ENCODE measurements at regions of chr16 and their contacts with region 1.

Region 1: DNA sequence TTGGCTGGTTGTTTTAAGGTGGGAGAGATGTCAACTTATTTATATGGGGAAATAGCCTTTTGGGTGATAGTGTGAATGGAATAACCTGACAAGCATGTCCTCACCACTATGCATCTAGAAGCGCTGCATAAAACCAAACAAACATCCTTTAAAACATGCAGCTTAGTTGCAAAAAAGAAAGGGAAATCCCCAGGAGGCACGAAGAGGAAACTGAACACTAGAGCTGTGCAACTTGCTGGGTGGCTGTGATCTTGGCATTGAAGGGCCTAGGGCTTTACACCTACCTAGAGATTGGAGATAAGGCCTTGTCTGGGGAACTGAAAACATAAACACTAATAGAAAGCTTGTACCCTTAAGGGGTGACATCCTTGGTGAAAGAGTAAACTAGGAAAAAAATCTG is 7.3 kb downstream of the C16orf54 start:
- DNase-seq: peak; percentile 74
- ATAC-seq: peak; percentile 91
- H3K4me3 ChIP-seq: peak overlapping the region in 1 of 5 experiments; percentile 9
- H3K4me3 Mint-ChIP-seq: peak overlapping the region; percentile 66
- H3K27ac ChIP-seq: peak overlapping the region in 1 of 2 donors; percentile 47
- H3K27ac Mint-ChIP-seq: peak overlapping the region; percentile 90
- H3K4me1 ChIP-seq: peaks cover 47 to 62% of the 10 kb centered on the region in 2 donors
- H3K4me1 Mint-ChIP-seq: peaks cover 73% of the 10 kb centered on the region
- H3K27me3 ChIP-seq: no peaks in the 10 kb centered on the region
- H3K27me3 Mint-ChIP-seq: no peaks in the 10 kb centered on the region
- CTCF ChIP-seq: no peak

Region 2: GRCh38 chr16:29678691-29679267 is 59.7 kb before region 1 on chr16 and contains the start of gene QPRT:
- CTCF ChIA-PET with region 1: no interaction called
- POLR2A ChIA-PET with region 1: interaction called, 15 read pairs
- intact Hi-C with region 1: loop called (anchors 10 kb)
- DNase-seq: peak; percentile 10
- ATAC-seq: no peak
- H3K4me3 ChIP-seq: peak within 1 kb of the TSS in 2 of 5 experiments; percentile 8 to 19
- H3K4me3 Mint-ChIP-seq: peak within 1 kb of the TSS; percentile 79
- H3K27ac ChIP-seq: no peak within 1 kb of the TSS
- H3K27ac Mint-ChIP-seq: peak within 1 kb of the TSS; percentile 21
- H3K4me1 ChIP-seq: peaks cover 14 to 25% of the 10 kb centered on the region in 2 donors
- H3K4me1 Mint-ChIP-seq: peaks cover 19% of the 10 kb centered on the region
- H3K27me3 ChIP-seq: no peaks in the 10 kb centered on the region
- H3K27me3 Mint-ChIP-seq: no peaks in the 10 kb centered on the region
- CTCF ChIP-seq: no peak
- total RNA-seq, gene QPRT: 0.22 and 0.24 TPM in 2 replicates

Region 3: GRCh38 chr16:29765167-29766032 is 26.9 kb after region 1 on chr16:
- CTCF ChIA-PET with region 1: no interaction called
- POLR2A ChIA-PET with region 1: no interaction called
- intact Hi-C with region 1: no loop called
- DNase-seq: no peak
- ATAC-seq: no peak
- H3K4me3 ChIP-seq: no peak overlapping the region
- H3K4me3 Mint-ChIP-seq: no peak overlapping the region
- H3K27ac ChIP-seq: no peak overlapping the region
- H3K27ac Mint-ChIP-seq: no peak overlapping the region
- H3K4me1 ChIP-seq: peaks cover 0 to 3% of the 10 kb centered on the region in 2 donors
- H3K4me1 Mint-ChIP-seq: no peaks in the 10 kb centered on the region
- H3K27me3 ChIP-seq: no peaks in the 10 kb centered on the region
- H3K27me3 Mint-ChIP-seq: no peaks in the 10 kb centered on the region
- CTCF ChIP-seq: no peak

Region 4: DNA sequence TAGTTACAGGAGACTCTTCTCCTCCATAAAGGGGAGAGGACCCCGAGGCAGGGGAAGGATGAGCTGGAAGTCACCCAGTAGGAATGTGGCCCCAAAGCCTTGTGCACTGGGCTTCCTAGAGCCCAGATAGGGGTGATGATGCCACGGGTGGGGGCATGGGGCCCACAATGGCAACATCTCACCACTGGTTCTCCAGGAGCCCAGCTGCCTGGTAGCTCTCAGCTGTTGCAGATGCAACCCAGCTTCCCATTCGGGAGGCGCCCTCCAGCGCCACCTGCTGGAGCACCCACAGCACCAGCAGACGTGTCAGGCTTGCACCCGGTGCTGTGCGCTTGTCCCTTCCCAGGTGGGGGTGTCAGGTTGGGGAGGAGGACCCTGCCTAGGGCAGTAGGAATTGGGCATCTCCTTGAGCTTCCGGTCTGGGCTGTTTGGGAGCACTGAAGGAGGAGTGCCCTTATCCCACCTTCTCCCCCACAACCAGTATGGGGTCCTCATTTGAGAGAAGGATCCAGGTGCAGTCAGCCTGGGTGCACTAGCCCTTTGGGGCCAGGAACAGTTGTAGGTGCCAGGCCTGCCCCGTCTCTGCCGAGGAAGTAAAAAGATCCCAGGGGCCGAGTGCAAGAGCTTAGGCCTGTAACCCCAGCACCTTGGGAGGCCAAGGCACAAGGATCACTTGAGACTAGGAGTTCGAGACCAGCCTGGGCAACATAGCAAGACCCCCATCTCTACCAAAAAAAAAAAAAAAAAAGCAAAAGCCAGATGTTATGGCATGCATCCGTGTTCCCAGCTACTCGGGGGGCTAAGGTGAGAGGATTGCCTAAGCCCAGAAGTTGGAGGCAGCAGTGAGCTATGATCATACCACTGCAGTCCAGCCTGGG is 110.1 kb after region 1 on chr16:
- CTCF ChIA-PET with region 1: interaction called, 10 read pairs
- POLR2A ChIA-PET with region 1: no interaction called
- intact Hi-C with region 1: no loop called
- DNase-seq: peak; percentile 75
- ATAC-seq: peak; percentile 79
- H3K4me3 ChIP-seq: no peak overlapping the region
- H3K4me3 Mint-ChIP-seq: no peak overlapping the region
- H3K27ac ChIP-seq: no peak overlapping the region
- H3K27ac Mint-ChIP-seq: no peak overlapping the region
- H3K4me1 ChIP-seq: no peaks in the 10 kb centered on the region
- H3K4me1 Mint-ChIP-seq: no peaks in the 10 kb centered on the region
- H3K27me3 ChIP-seq: no peaks in the 10 kb centered on the region
- H3K27me3 Mint-ChIP-seq: no peaks in the 10 kb centered on the region
- CTCF ChIP-seq: peak; percentile 78

Measured in B cell (primary cell).